Ascending aorta (tissue), 2 donors: ENCODE measurements at regions of chr7 and their contacts with region 1.

Region 1: DNA sequence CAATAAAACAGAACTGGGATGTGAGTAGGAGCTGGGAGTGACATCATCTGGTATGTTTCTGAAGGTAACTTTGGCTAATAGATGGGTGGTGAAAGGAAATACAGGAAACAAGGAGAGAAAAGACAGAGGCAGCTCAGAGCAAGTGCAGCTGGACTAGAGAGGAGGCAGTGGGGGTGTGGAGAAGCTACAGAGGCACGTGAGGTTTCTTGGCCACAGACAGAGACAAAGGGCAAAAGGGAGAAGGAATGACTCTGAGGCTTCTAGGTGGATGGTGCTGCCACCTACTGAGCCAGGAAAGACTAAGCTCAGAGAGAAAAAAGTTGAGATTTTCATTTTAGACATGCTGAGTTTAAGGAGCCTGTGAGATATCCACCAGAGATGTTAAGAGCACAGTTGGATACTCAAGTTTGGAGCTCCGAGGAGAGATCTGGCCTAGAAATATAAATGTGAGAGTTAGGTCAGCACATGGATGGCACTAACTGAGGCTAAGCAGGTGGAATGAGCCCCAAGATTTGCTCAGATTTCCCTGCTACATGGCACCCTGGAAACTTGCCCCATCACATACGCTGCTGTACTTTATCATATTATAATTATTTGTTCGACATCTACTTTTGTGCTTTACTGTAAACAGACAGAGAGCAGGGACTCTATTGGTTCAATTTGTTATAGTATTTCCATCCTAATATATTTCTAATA is 293.0 kb upstream of the IMMP2L start:
- DNase-seq: no peak
- H3K4me3 ChIP-seq: no peak overlapping the region
- H3K27ac ChIP-seq: no peak overlapping the region
- H3K4me1 ChIP-seq: no peaks in the 10 kb centered on the region
- H3K27me3 ChIP-seq: no peaks in the 10 kb centered on the region
- CTCF ChIP-seq: peak; percentile 14 to 59 (median 30)

Region 2: GRCh38 chr7:111763221-111763801 is 92.0 kb before region 1 on chr7:
- intact Hi-C with region 1: loop called (anchors 1 kb)
- DNase-seq: no peak
- H3K4me3 ChIP-seq: no peak overlapping the region
- H3K27ac ChIP-seq: no peak overlapping the region
- H3K4me1 ChIP-seq: peaks cover 0 to 2% of the 10 kb centered on the region in 2 donors
- H3K27me3 ChIP-seq: no peaks in the 10 kb centered on the region
- CTCF ChIP-seq: peak; percentile 37 to 64 (median 57)

Region 3: DNA sequence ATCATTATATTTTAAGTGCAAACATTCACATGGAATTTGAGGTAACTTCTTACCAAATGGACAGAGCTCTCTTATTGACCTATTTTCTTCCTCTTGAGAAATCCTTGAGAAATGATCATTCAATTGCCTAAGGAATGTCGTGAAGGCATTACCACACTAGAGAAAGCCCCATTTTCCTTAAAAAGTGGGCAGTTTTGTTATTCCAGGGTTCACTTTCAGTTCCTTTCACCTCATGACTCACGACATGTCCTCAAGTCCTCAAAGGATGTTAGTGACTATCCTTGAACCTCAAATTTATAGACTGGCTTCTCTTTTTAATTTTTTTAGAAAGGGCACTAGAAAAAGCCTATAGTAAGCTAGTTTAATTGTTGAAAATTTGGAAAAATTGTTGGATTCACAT is 1303.4 kb after region 1 on chr7:
- intact Hi-C with region 1: no loop called
- DNase-seq: no peak
- H3K4me3 ChIP-seq: no peak overlapping the region
- H3K27ac ChIP-seq: no peak overlapping the region
- H3K4me1 ChIP-seq: no peaks in the 10 kb centered on the region
- H3K27me3 ChIP-seq: no peaks in the 10 kb centered on the region
- CTCF ChIP-seq: no peak